ENCODE measurements at regions of chr15 and their contacts with region 1.

Region 1: GRCh38 chr15:34301058-34301457 is 36.5 kb downstream of the SLC12A6 start:
- DNase-seq: no peak
- H3K4me3 Mint-ChIP-seq: no peak overlapping the region
- H3K27ac Mint-ChIP-seq: no peak overlapping the region
- H3K4me1 Mint-ChIP-seq: peaks cover 23% of the 10 kb centered on the region
- H3K27me3 Mint-ChIP-seq: no peaks in the 10 kb centered on the region

Region 2: GRCh38 chr15:34280193-34280592 is 20.9 kb before region 1 on chr15:
- intact Hi-C with region 1: loop called (anchors 2 kb)
- DNase-seq: no peak
- H3K4me3 Mint-ChIP-seq: no peak overlapping the region
- H3K27ac Mint-ChIP-seq: no peak overlapping the region
- H3K4me1 Mint-ChIP-seq: peaks cover 7% of the 10 kb centered on the region
- H3K27me3 Mint-ChIP-seq: no peaks in the 10 kb centered on the region

Measured in activated T-helper 1 cell treated with anti-CD3 and anti-CD28 coated beads, Interleukin-12 subunit alpha, Interleukin-12 subunit beta, Interleukin-2, Interleukin-4 antibody, amounts not matched to agents 30 ng/mL and 10 ng/mL and 1 ng/mL, durations not matched to agents 14 hours and 24 hours and 36 hours (primary cell).